ENCODE measurements at regions of chr19 and their contacts with region 1.

Region 1: DNA sequence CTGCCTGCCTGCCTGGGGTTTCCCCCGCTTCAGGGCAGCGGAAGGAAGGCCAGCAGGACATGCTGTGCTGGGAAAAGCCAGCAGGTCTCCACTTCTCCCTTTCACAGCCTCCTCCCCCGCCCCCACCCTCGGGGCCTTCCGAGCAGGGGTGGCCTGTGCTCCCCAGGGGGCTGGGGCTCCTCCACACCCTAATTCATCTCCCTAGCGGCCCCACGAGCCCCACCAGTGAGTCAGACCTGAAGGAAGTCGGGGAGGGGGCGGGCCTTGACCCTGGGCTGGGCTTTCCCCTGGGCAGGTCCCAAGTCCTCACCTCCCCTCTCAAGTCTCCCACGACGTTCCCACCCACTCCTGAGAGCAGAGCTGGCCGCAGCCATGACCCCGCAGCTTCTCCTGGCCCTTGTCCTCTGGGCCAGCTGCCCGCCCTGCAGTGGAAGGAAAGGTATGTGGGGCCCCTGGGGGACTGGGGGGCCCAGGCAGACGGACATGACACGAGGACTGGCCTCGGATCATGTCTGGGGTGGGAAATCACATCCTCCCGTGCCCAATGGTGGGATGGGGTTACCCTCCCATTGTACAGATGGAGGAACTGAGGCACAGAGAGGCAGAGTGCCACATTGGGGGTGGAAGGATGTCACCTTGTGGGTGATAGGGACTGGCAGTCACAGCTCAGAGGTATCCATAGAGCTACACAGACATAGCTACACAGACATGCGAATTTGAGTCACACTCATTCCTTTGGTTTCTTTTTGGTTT is at the start of gene EBI3:
- DNase-seq: peak; percentile 84
- ATAC-seq: peak; percentile 92
- H3K4me3 ChIP-seq: peak within 1 kb of the TSS in 4 of 5 experiments; percentile 34 to 44 (median 37)
- H3K4me3 Mint-ChIP-seq: no peak within 1 kb of the TSS
- H3K27ac ChIP-seq: peak within 1 kb of the TSS; percentile 40 to 59
- H3K27ac Mint-ChIP-seq: no peak within 1 kb of the TSS
- H3K4me1 ChIP-seq: peaks cover 26 to 32% of the 10 kb centered on the region in 2 donors
- H3K4me1 Mint-ChIP-seq: peaks cover 5% of the 10 kb centered on the region
- H3K27me3 ChIP-seq: no peaks in the 10 kb centered on the region
- H3K27me3 Mint-ChIP-seq: no peaks in the 10 kb centered on the region
- CTCF ChIP-seq: no peak
- total RNA-seq, gene EBI3: 11.3 and 15.6 TPM in 2 replicates

Region 2: DNA sequence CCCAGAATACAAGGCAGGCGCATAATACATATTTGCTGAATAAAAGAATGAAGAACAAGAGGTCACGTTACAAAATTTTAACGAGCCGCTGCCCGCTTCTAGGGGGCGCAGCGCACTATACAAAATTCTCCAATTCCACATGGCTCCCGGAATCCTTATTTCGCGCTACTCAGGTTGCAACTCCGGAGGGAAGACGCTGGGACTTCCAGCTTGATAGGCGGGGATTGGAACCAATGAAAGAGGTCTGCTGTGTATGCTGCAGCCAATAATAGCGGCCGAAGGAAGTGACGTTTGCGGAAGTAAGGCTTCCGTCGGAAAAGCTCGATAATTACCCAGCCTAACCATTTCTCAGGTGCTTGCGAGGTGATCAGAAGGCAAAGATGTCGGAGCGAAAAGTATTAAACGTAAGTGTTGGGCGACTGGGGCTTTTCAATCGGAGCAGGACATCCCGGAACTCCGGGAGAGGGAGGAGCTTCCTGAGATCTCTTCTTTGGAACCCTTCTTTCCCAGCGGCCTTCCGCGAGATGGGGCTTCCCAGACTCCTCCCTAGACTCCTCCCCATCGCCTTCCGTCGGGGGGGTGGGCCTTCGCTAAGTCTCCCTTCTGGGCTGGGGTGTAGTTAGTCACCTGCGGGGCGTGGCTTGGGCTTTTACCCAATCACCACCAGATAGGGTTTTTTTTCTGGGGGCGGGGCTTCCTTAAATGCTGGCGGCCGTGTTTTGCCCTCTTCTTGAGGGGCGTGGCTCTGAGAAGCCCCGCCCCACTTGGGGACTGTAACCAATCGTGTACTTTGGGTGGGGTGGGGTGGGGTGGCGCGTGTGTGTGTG is 17.6 kb after region 1 on chr19 and contains the start of gene YJU2:
- CTCF ChIA-PET with region 1: interaction called, 7 read pairs
- POLR2A ChIA-PET with region 1: interaction called, 5 read pairs
- intact Hi-C with region 1: loop called (anchors 1 kb)
- DNase-seq: peak; percentile 99
- ATAC-seq: peak; percentile 94
- H3K4me3 ChIP-seq: peak within 1 kb of the TSS; percentile 86 to 99 (median 98)
- H3K4me3 Mint-ChIP-seq: peak within 1 kb of the TSS; percentile 91
- H3K27ac ChIP-seq: peak within 1 kb of the TSS; percentile 99 to 100
- H3K27ac Mint-ChIP-seq: peak within 1 kb of the TSS; percentile 95
- H3K4me1 ChIP-seq: peaks cover 12 to 24% of the 10 kb centered on the region in 2 donors
- H3K4me1 Mint-ChIP-seq: peaks cover 23% of the 10 kb centered on the region
- H3K27me3 ChIP-seq: no peaks in the 10 kb centered on the region
- H3K27me3 Mint-ChIP-seq: no peaks in the 10 kb centered on the region
- CTCF ChIP-seq: peak; percentile 40
- total RNA-seq, gene YJU2: 39.8 and 40.3 TPM in 2 replicates